ENCODE measurements at regions of chr1 and their contacts with region 1.

Region 1: GRCh38 chr1:235304549-235305451 is 23.2 kb downstream of the ARID4B start:
- DNase-seq: no peak
- ATAC-seq: peak; percentile 60
- H3K4me3 Mint-ChIP-seq: peak overlapping the region; percentile 30
- H3K27ac Mint-ChIP-seq: peak overlapping the region; percentile 79
- H3K4me1 Mint-ChIP-seq: peaks cover 65% of the 10 kb centered on the region
- H3K27me3 Mint-ChIP-seq: no peaks in the 10 kb centered on the region
- CTCF ChIP-seq: no peak

Region 2: GRCh38 chr1:235286667-235287066 is 18.1 kb before region 1 on chr1:
- CTCF ChIA-PET with region 1: no interaction called
- POLR2A ChIA-PET with region 1: interaction called, 10 read pairs
- intact Hi-C with region 1: loop called (anchors 2 kb)
- DNase-seq: no peak
- ATAC-seq: no peak
- H3K4me3 Mint-ChIP-seq: no peak overlapping the region
- H3K27ac Mint-ChIP-seq: peak overlapping the region; percentile 26
- H3K4me1 Mint-ChIP-seq: peaks cover 67% of the 10 kb centered on the region
- H3K27me3 Mint-ChIP-seq: no peaks in the 10 kb centered on the region
- CTCF ChIP-seq: no peak

Region 3: DNA sequence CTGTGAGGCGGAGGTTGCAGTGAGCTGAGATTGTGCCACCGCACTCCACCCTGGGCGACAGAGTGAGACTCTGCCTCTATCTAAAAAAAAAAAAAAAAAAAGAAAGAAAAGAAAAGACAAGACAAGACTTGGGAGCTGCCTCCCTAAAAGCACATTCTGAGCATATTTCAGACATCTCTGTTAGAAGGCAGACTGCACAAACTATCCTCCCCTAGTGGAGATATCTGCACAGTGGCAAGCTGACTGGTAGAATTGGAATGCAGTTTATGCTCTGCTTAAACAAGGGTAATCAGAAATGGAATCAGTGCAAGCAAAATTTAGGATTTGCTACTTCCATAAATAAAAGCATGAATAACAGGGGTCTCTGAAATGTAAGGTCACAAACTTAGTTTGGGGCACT is 313.0 kb after region 1 on chr1:
- CTCF ChIA-PET with region 1: no interaction called
- POLR2A ChIA-PET with region 1: no interaction called
- intact Hi-C with region 1: no loop called
- DNase-seq: no peak
- ATAC-seq: no peak
- H3K4me3 Mint-ChIP-seq: no peak overlapping the region
- H3K27ac Mint-ChIP-seq: no peak overlapping the region
- H3K4me1 Mint-ChIP-seq: no peaks in the 10 kb centered on the region
- H3K27me3 Mint-ChIP-seq: peaks cover 7% of the 10 kb centered on the region
- CTCF ChIP-seq: no peak

Measured in activated B cell treated with CpG ODN at 0.5 μM for 24 hours (primary cell).